Mammary epithelial cell (primary cell): ENCODE measurements at regions of chr16 and their contacts with region 1.

Region 1: DNA sequence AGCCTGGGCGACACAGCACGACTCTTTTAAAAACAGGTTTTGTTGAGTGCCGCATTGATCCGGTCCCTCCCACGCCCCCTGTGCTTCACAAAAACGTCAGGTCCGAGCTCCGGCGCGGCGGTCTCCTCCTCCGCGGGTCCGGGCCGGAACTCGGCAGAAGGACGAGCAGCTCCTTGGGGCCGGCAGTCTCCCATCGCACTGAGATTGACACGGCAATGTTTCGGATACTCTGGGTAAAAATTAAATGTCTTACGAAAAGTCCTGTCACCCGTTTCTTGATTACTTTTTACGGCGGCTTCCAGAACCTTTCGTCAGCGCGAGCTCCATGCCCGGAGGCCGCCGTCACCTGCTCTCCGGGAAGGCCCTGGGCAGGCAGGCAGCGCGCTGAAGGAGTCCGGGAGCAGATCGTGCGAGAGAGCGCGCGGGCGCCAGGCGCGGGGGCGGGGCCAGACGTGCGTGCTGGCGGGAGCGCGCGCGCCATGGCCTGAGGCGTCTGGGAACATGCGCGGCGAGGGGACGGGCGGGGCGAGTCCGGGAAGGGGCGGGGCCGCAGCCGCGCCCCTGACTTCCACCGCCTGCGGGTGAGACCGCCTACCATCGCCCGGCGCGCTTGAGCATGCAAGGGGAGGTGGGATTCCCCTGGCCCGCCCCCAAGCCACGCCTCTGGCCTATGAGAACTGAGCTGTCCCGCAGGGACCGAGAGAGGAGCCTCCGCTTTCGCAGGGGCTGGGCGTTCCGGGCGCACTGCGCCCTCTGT is 11.7 kb upstream of the SRL start:
- DNase-seq: peak; percentile 98
- H3K4me3 ChIP-seq: peak overlapping the region; percentile 66 to 86 (median 77)
- H3K27ac ChIP-seq: peak overlapping the region; percentile 71
- H3K4me1 ChIP-seq: no peaks in the 10 kb centered on the region
- H3K27me3 ChIP-seq: no peaks in the 10 kb centered on the region
- CTCF ChIP-seq: peak in 1 of 2 donors; percentile 4

Region 2: DNA sequence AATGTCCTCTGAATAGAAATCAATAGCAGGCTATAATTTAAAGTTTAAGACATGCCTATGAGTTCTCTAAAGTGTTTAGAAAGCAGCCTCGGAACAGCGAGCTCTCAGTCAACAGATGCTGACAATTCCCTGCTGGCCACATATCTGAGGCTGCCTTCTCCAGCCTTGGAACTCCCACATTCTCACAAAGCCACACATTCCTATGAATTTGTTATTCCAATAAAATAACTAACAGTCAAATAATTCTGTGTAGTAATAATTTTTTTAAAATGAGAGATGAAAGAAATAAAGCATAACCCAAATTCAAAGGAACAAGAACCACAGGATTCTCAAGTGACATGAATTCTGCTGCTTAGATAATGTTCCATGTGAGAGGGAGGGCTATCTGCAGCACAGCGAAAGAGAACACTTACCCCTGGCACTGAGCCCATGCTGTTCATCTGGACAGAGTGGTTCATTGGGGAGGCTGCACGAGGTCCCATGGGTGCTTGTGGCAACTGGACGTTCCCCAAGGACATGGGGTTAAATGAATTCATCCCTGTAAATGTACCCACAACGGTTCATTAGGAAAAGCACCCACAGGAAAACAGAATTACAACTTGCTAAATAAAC is 479.3 kb before region 1 on chr16:
- CTCF ChIA-PET with region 1: no interaction called
- dilution Hi-C with region 1: no loop called
- in situ Hi-C with region 1: no loop called
- intact Hi-C with region 1: loop called (anchors 10 kb)
- DNase-seq: no peak
- H3K4me3 ChIP-seq: no peak overlapping the region
- H3K27ac ChIP-seq: no peak overlapping the region
- H3K4me1 ChIP-seq: peaks cover 7% of the 10 kb centered on the region
- H3K27me3 ChIP-seq: no peaks in the 10 kb centered on the region
- CTCF ChIP-seq: no peak

Region 3: DNA sequence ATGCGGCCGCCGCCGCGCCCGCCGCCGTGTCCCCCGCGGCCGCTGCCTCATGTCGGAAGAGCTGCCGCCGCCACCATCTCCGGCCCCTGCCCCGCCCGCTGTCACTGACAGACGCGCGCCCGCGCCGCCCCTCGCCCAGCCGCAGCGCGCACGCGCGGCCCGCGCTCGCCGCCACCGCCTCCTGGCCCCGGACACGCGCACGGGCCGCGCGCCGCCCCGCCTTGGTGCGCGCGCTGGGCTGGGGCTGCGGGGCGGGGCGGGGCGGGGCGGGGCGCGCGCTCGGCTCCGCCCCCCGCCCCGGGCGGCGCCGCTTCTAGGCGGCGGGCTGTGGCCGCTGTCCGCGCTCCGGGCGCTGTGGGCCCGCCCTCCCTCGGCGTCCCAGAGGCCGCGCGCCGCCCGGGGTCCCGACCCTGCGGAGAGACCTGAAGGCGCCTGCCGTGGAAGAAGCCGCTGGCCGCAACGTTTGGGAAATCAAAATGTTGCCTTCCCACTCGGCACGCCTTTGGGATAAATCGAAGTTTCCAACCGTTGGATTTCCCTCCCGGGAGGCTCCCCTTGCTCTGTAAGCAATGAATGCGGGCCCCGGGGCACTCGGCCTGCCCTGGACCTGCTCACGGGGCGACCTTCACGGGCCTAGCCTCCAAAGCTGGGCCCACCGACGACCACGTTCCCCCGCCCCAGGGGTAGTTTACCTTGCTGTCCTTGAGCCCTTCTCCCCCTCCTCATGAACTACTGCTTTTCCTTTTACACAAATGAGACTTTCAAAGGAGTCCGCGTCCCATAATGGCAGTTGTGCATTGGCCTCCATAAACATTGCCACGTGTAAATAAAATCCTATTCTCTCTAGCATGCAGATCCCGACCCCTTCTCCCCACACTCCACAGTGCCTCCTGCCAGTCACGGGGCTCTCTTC is 137.0 kb before region 1 on chr16 and contains the start of gene ADCY9:
- CTCF ChIA-PET with region 1: no interaction called
- dilution Hi-C with region 1: no loop called
- in situ Hi-C with region 1: loop called in 1 of 2 experiments (anchors 10 kb)
- intact Hi-C with region 1: loop called (anchors 1 kb)
- DNase-seq: peak; percentile 53
- H3K4me3 ChIP-seq: peak within 1 kb of the TSS; percentile 36 to 63 (median 59)
- H3K27ac ChIP-seq: no peak within 1 kb of the TSS
- H3K4me1 ChIP-seq: peaks cover 20% of the 10 kb centered on the region
- H3K27me3 ChIP-seq: no peaks in the 10 kb centered on the region
- CTCF ChIP-seq: no peak
- total RNA-seq, gene ADCY9: 18.4 to 27.3 TPM

Region 4: GRCh38 chr16:4200000-4200780 is 53.4 kb before region 1 on chr16:
- CTCF ChIA-PET with region 1: interaction called, 13 read pairs
- dilution Hi-C with region 1: no loop called
- in situ Hi-C with region 1: loop called in 1 of 2 experiments (anchors 10 kb)
- intact Hi-C with region 1: loop called (anchors 1 kb)
- DNase-seq: peak; percentile 51
- H3K4me3 ChIP-seq: no peak overlapping the region
- H3K27ac ChIP-seq: no peak overlapping the region
- H3K4me1 ChIP-seq: peaks cover 3% of the 10 kb centered on the region
- H3K27me3 ChIP-seq: no peaks in the 10 kb centered on the region
- CTCF ChIP-seq: peak; percentile 81 to 91

Region 5: DNA sequence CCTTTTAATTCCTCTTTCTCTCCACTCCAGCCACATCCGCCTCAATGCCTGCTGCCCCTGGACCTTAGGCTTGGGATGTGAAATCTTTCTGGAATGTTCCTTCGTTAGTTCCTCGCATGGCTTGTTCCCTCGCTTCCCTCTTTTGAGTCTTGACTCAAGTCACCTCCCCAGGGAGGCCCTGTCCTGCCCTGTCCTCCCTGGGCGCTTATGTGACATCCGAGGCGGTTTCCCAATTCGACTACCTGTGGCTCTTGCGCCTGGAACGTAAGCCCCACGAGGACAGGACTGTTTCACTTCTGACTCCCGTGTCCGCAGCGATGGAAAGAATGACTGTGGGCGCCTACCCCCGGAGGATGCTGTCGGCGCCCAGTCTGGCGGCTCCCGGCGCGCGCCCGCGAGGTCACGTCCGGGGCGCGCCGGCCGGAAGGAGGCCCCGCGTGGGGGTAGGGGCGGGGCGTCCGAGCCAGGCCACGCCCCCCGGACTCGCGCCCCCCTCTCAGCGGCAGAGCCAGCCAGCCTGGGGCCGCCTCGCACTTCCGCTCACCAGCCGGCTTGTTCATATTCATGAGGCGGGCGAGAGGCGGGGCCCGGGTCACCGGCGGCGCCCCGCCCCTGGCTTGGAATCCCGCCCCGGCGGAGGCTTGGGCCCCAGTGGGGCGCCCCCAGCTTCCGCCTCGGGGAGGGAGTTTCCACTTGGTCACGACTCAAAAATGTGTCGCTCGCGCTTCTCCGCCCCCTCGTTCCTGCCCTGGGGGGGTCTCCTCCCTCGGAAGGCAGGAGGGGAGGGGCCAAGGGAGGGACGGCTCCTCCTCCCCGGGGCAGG is 53.9 kb after region 1 on chr16:
- CTCF ChIA-PET with region 1: no interaction called
- dilution Hi-C with region 1: loop called (anchors 10 kb)
- in situ Hi-C with region 1: no loop called
- intact Hi-C with region 1: no loop called
- DNase-seq: peak; percentile 95
- H3K4me3 ChIP-seq: peak overlapping the region; percentile 39 to 59 (median 54)
- H3K27ac ChIP-seq: peak overlapping the region; percentile 2
- H3K4me1 ChIP-seq: peaks cover 7% of the 10 kb centered on the region
- H3K27me3 ChIP-seq: no peaks in the 10 kb centered on the region
- CTCF ChIP-seq: no peak

Region 6: GRCh38 chr16:4391631-4392381 is 138.2 kb after region 1 on chr16:
- CTCF ChIA-PET with region 1: no interaction called
- dilution Hi-C with region 1: no loop called
- in situ Hi-C with region 1: no loop called
- intact Hi-C with region 1: no loop called
- DNase-seq: no peak
- H3K4me3 ChIP-seq: no peak overlapping the region
- H3K27ac ChIP-seq: peak overlapping the region; percentile 74
- H3K4me1 ChIP-seq: peaks cover 30% of the 10 kb centered on the region
- H3K27me3 ChIP-seq: no peaks in the 10 kb centered on the region
- CTCF ChIP-seq: no peak

Region 7: DNA sequence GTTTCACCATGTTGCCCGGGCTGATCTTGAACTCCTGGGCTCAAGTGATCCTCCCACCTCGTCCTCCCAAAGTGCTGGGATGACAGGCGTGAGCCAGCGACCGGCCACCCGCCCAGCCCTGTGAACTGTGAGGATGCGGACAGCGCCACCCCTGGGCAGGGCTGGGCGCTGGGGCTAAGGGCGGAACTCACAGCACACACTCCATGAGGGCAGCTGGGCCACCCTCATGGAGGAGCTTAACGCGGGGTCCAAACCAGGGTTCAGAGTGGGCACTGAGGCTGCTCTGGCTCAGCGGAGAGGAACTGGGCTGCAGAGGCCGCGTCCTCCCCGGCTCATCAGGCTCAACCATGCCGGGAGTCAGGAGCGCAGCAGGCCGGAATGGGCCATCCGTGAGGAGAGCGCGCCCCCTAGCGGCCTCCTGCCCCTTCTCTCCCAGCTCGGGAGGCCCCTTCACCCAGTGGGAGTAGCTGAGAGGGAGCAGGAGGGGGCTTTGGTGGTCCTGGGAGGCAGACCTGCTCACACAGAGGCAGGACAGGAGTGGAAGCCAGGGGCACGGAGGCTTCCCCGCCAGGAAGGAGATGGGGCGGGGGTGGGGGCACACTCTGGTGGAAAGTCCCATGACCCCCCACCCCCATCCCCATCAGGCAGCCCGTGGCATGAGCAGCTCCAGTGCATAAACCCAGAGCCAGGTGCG is 149.0 kb after region 1 on chr16:
- CTCF ChIA-PET with region 1: no interaction called
- dilution Hi-C with region 1: no loop called
- in situ Hi-C with region 1: loop called in 1 of 2 experiments (anchors 25 kb)
- intact Hi-C with region 1: loop called (anchors 1 kb)
- DNase-seq: peak; percentile 53
- H3K4me3 ChIP-seq: peak overlapping the region in 1 of 3 experiments; percentile 22
- H3K27ac ChIP-seq: no peak overlapping the region
- H3K4me1 ChIP-seq: peaks cover 4% of the 10 kb centered on the region
- H3K27me3 ChIP-seq: no peaks in the 10 kb centered on the region
- CTCF ChIP-seq: peak; percentile 57 to 88